CD4-positive, alpha-beta T cell (primary cell): ENCODE measurements at regions of chr9 and their contacts with region 1.

Region 1: DNA sequence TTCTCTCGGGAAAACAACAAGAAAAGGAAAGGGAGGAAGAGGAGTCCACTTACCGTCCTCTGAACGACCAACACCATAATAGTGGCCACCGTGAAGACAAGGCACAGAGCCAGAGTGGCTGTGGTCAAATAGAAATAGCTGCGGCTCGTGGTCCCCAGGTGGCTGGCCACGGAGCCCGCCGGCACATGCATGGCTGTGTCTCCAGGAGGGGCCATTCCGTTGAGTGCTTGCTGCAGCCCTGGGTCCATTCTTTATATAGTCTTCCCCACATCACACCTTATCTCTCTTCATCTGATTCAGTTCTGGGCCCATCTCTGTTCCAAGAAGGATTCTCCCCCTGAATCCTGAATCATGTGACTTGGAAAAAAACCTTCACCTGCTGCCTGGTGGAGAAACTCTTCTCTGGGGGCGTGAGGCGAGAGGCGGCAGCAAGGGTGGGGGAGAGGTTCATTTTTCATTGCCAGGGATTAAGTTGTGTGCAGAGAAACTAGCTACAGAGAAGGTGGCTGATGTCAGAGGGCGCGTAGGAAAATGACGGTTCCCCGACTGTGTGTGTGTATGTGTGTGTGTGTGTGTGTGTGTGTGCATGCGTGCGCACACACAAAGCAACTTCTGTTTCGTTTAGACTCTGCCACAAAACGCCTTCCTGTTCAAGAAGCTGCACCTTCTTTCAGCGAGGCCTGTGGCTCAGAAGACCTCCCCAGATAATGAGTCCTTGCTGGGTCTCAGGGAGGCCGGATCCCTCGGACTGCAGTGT is at the start of gene TNFSF8:
- DNase-seq: peak; percentile 50 to 92 (median 69)
- ATAC-seq: peak; percentile 80
- H3K4me3 ChIP-seq: peak within 1 kb of the TSS; percentile 91
- H3K4me3 Mint-ChIP-seq: peak within 1 kb of the TSS; percentile 98
- H3K27ac ChIP-seq: peak within 1 kb of the TSS; percentile 69 to 84
- H3K27ac Mint-ChIP-seq: peak within 1 kb of the TSS; percentile 95
- H3K4me1 ChIP-seq: peaks cover 33% of the 10 kb centered on the region
- H3K4me1 Mint-ChIP-seq: peaks cover 65% of the 10 kb centered on the region
- H3K27me3 ChIP-seq: no peaks in the 10 kb centered on the region
- H3K27me3 Mint-ChIP-seq: no peaks in the 10 kb centered on the region
- CTCF ChIP-seq: no peak
- total RNA-seq, gene TNFSF8: 70.9 to 71.6 TPM

Region 2: GRCh38 chr9:114397848-114398605 is 532.2 kb before region 1 on chr9:
- CTCF ChIA-PET with region 1: no interaction called
- POLR2A ChIA-PET with region 1: interaction called, 3 read pairs
- intact Hi-C with region 1: loop called in 1 of 2 experiments (anchors 5 kb)
- DNase-seq: peak; percentile 90 to 98 (median 96)
- ATAC-seq: peak; percentile 84
- H3K4me3 ChIP-seq: peak overlapping the region; percentile 99
- H3K4me3 Mint-ChIP-seq: peak overlapping the region; percentile 97
- H3K27ac ChIP-seq: peak overlapping the region; percentile 93 to 94
- H3K27ac Mint-ChIP-seq: peak overlapping the region; percentile 98
- H3K4me1 ChIP-seq: peaks cover 53% of the 10 kb centered on the region
- H3K4me1 Mint-ChIP-seq: peaks cover 45% of the 10 kb centered on the region
- H3K27me3 ChIP-seq: no peaks in the 10 kb centered on the region
- H3K27me3 Mint-ChIP-seq: no peaks in the 10 kb centered on the region
- CTCF ChIP-seq: no peak

Region 3: GRCh38 chr9:114836769-114837168 is 93.5 kb before region 1 on chr9:
- CTCF ChIA-PET with region 1: no interaction called
- POLR2A ChIA-PET with region 1: no interaction called
- intact Hi-C with region 1: no loop called
- DNase-seq: no peak
- ATAC-seq: no peak
- H3K4me3 ChIP-seq: no peak overlapping the region
- H3K4me3 Mint-ChIP-seq: no peak overlapping the region
- H3K27ac ChIP-seq: no peak overlapping the region
- H3K27ac Mint-ChIP-seq: no peak overlapping the region
- H3K4me1 ChIP-seq: no peaks in the 10 kb centered on the region
- H3K4me1 Mint-ChIP-seq: peaks cover 10% of the 10 kb centered on the region
- H3K27me3 ChIP-seq: no peaks in the 10 kb centered on the region
- H3K27me3 Mint-ChIP-seq: no peaks in the 10 kb centered on the region
- CTCF ChIP-seq: no peak

Region 4: DNA sequence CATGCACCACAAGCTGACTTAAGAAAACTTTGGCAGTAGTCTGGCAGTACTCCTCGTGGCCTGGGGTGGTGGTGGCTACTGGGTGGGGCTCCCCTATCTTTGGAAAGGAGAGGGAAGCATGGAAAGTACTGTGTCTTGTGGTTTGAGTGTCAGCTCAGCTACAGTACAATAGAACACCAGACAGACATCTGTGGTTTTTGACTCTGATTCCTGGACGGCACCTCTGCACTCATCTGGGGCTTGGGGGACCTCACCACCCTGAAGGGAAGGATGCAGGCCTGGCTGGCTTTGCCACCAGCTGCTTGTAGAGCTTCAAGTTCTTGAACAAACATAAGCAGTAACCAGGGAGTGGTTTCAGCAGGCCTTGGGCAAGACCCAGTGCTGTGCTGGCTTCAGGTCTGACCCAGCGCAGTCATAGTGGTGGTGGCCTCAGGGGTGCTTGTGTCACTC is 40.4 kb before region 1 on chr9:
- CTCF ChIA-PET with region 1: interaction called, 3 read pairs
- POLR2A ChIA-PET with region 1: interaction called, 13 read pairs
- intact Hi-C with region 1: no loop called
- DNase-seq: peak in 1 of 14 experiments; percentile 14
- ATAC-seq: peak; percentile 42
- H3K4me3 ChIP-seq: no peak overlapping the region
- H3K4me3 Mint-ChIP-seq: peak overlapping the region; percentile 28
- H3K27ac ChIP-seq: no peak overlapping the region
- H3K27ac Mint-ChIP-seq: peak overlapping the region; percentile 25
- H3K4me1 ChIP-seq: peaks cover 32% of the 10 kb centered on the region
- H3K4me1 Mint-ChIP-seq: peaks cover 63% of the 10 kb centered on the region
- H3K27me3 ChIP-seq: no peaks in the 10 kb centered on the region
- H3K27me3 Mint-ChIP-seq: no peaks in the 10 kb centered on the region
- CTCF ChIP-seq: no peak

Region 5: DNA sequence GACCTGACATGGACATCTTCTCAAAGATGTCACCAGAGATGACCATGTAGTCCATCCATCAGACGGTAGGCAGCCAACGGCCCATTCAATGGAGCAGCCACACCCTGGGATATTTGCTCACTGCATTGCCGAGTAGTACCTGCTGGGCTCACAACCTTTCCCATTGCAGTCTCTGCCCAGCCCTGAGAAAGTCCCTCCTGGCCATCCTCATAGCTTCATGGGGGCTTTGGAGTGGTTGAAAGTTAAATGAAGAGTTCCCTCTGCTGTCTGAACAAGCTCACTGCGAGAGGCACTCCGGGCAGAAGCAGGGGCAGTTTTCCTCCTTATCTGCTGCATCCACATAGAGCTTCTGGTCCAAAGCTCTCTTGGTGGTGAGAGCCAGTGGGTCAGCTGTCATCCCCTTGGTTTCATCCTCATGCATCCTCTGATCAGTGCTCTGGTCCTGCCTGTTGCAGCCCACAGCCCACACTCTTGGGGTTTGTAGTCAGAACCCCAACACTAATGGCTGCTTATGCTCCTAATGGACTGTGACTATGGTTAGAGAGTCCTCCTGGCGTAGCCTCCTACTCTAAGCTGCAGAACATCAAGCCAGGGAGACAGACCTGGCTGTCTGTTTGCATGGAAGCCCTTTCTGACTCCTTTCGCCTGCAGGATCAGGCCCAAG is 23.2 kb before region 1 on chr9:
- CTCF ChIA-PET with region 1: interaction called, 5 read pairs
- POLR2A ChIA-PET with region 1: interaction called, 27 read pairs
- intact Hi-C with region 1: loop called in 1 of 2 experiments (anchors 2 kb)
- DNase-seq: peak in 4 of 14 experiments; percentile 34 to 66 (median 56)
- ATAC-seq: no peak
- H3K4me3 ChIP-seq: no peak overlapping the region
- H3K4me3 Mint-ChIP-seq: no peak overlapping the region
- H3K27ac ChIP-seq: peak overlapping the region in 1 of 2 donors; percentile 7
- H3K27ac Mint-ChIP-seq: peak overlapping the region; percentile 85
- H3K4me1 ChIP-seq: peaks cover 84% of the 10 kb centered on the region
- H3K4me1 Mint-ChIP-seq: peaks cover 55% of the 10 kb centered on the region
- H3K27me3 ChIP-seq: no peaks in the 10 kb centered on the region
- H3K27me3 Mint-ChIP-seq: no peaks in the 10 kb centered on the region
- CTCF ChIP-seq: peak; percentile 69

Region 6: GRCh38 chr9:114919611-114920010 is 10.6 kb before region 1 on chr9:
- CTCF ChIA-PET with region 1: interaction called, 3 read pairs
- POLR2A ChIA-PET with region 1: interaction called, 33 read pairs
- intact Hi-C with region 1: no loop called
- DNase-seq: no peak
- ATAC-seq: no peak
- H3K4me3 ChIP-seq: no peak overlapping the region
- H3K4me3 Mint-ChIP-seq: no peak overlapping the region
- H3K27ac ChIP-seq: no peak overlapping the region
- H3K27ac Mint-ChIP-seq: peak overlapping the region; percentile 46
- H3K4me1 ChIP-seq: peaks cover 68% of the 10 kb centered on the region
- H3K4me1 Mint-ChIP-seq: peaks cover 96% of the 10 kb centered on the region
- H3K27me3 ChIP-seq: no peaks in the 10 kb centered on the region
- H3K27me3 Mint-ChIP-seq: no peaks in the 10 kb centered on the region
- CTCF ChIP-seq: no peak

Region 7: GRCh38 chr9:116549061-116549664 is 1618.9 kb after region 1 on chr9:
- CTCF ChIA-PET with region 1: no interaction called
- POLR2A ChIA-PET with region 1: no interaction called
- intact Hi-C with region 1: no loop called
- DNase-seq: peak in 2 of 14 experiments; percentile 51 to 66
- ATAC-seq: no peak
- H3K4me3 ChIP-seq: no peak overlapping the region
- H3K4me3 Mint-ChIP-seq: no peak overlapping the region
- H3K27ac ChIP-seq: no peak overlapping the region
- H3K27ac Mint-ChIP-seq: no peak overlapping the region
- H3K4me1 ChIP-seq: no peaks in the 10 kb centered on the region
- H3K4me1 Mint-ChIP-seq: no peaks in the 10 kb centered on the region
- H3K27me3 ChIP-seq: no peaks in the 10 kb centered on the region
- H3K27me3 Mint-ChIP-seq: no peaks in the 10 kb centered on the region
- CTCF ChIP-seq: no peak